Mammary epithelial cell (primary cell): ENCODE measurements at regions of chr9 and their contacts with region 1.

Region 1: DNA sequence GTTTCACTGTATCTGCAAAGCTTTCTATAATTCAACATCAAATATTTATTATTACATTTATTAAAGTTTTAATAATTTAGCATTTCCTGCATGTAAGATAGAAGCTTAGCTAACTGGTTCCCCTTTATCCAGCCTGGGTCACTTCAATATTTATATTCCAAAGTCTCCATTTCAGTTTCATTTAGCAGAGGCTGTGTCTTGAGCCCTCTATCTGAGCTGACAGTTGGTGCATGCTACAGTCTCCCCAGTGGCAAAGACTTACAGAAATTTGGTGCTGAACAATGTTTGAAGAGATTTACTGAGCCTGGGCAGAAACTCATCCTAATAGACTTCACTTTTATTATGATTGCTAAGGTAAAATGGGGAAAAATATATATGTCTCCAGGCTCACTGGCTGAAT is 279.1 kb downstream of the TRIM32 start:
- DNase-seq: no peak
- H3K4me3 ChIP-seq: no peak overlapping the region
- H3K27ac ChIP-seq: no peak overlapping the region
- H3K4me1 ChIP-seq: no peaks in the 10 kb centered on the region
- H3K27me3 ChIP-seq: no peaks in the 10 kb centered on the region
- CTCF ChIP-seq: no peak

Region 2: GRCh38 chr9:116905111-116905720 is 61.0 kb before region 1 on chr9:
- CTCF ChIA-PET with region 1: no interaction called
- dilution Hi-C with region 1: loop called (anchors 5 kb)
- in situ Hi-C with region 1: no loop called
- intact Hi-C with region 1: no loop called
- DNase-seq: no peak
- H3K4me3 ChIP-seq: no peak overlapping the region
- H3K27ac ChIP-seq: no peak overlapping the region
- H3K4me1 ChIP-seq: no peaks in the 10 kb centered on the region
- H3K27me3 ChIP-seq: no peaks in the 10 kb centered on the region
- CTCF ChIP-seq: no peak

Region 3: GRCh38 chr9:116987721-116988485 is 21.7 kb after region 1 on chr9:
- CTCF ChIA-PET with region 1: no interaction called
- dilution Hi-C with region 1: no loop called
- in situ Hi-C with region 1: no loop called
- intact Hi-C with region 1: no loop called
- DNase-seq: no peak
- H3K4me3 ChIP-seq: no peak overlapping the region
- H3K27ac ChIP-seq: no peak overlapping the region
- H3K4me1 ChIP-seq: peaks cover 11% of the 10 kb centered on the region
- H3K27me3 ChIP-seq: no peaks in the 10 kb centered on the region
- CTCF ChIP-seq: no peak